MCF 10A (cell line): ENCODE measurements at regions of chr13 and their contacts with region 1.

Region 1: GRCh38 chr13:51797664-51798488 is 6.1 kb downstream of the DHRS12 start:
- DNase-seq: peak; percentile 83
- H3K4me3 Mint-ChIP-seq: no peak overlapping the region
- H3K27ac Mint-ChIP-seq: no peak overlapping the region
- H3K4me1 Mint-ChIP-seq: peaks cover 22% of the 10 kb centered on the region
- H3K27me3 Mint-ChIP-seq: no peaks in the 10 kb centered on the region
- CTCF ChIP-seq: peak; percentile 60

Region 2: GRCh38 chr13:51148952-51149573 is 648.8 kb before region 1 on chr13:
- CTCF ChIA-PET with region 1: interaction called, 21 read pairs
- POLR2A ChIA-PET with region 1: no interaction called
- intact Hi-C with region 1: loop called (anchors 1 kb)
- DNase-seq: peak; percentile 38
- H3K4me3 Mint-ChIP-seq: no peak overlapping the region
- H3K27ac Mint-ChIP-seq: no peak overlapping the region
- H3K4me1 Mint-ChIP-seq: no peaks in the 10 kb centered on the region
- H3K27me3 Mint-ChIP-seq: peaks cover 96% of the 10 kb centered on the region
- CTCF ChIP-seq: peak; percentile 53

Region 3: DNA sequence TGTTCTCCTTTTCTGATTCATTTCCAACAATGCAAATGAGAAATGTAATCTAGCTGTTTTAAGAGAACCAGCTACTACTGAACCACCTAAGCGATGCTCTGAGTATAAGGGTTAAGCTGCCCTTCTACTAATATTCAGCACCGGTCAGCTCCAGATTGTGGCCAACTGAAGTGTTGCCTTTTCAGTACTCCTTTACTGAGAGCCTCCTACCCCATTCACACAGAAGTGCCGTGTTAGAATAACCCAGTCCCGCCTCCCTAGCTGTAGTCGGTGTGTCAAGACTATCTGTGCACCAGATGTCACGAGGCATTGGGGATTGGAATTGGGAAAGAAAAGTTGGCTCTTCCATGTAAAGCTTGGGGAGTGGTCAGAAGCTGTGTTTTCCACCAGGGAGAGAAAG is 530.3 kb before region 1 on chr13:
- CTCF ChIA-PET with region 1: no interaction called
- POLR2A ChIA-PET with region 1: no interaction called
- intact Hi-C with region 1: no loop called
- DNase-seq: no peak
- H3K4me3 Mint-ChIP-seq: no peak overlapping the region
- H3K27ac Mint-ChIP-seq: no peak overlapping the region
- H3K4me1 Mint-ChIP-seq: no peaks in the 10 kb centered on the region
- H3K27me3 Mint-ChIP-seq: no peaks in the 10 kb centered on the region
- CTCF ChIP-seq: no peak

Region 4: GRCh38 chr13:51425410-51426042 is 372.4 kb before region 1 on chr13:
- CTCF ChIA-PET with region 1: interaction called, 13 read pairs
- POLR2A ChIA-PET with region 1: interaction called, 5 read pairs
- intact Hi-C with region 1: no loop called
- DNase-seq: peak; percentile 34
- H3K4me3 Mint-ChIP-seq: no peak overlapping the region
- H3K27ac Mint-ChIP-seq: peak overlapping the region; percentile 42
- H3K4me1 Mint-ChIP-seq: peaks cover 46% of the 10 kb centered on the region
- H3K27me3 Mint-ChIP-seq: no peaks in the 10 kb centered on the region
- CTCF ChIP-seq: no peak

Region 5: DNA sequence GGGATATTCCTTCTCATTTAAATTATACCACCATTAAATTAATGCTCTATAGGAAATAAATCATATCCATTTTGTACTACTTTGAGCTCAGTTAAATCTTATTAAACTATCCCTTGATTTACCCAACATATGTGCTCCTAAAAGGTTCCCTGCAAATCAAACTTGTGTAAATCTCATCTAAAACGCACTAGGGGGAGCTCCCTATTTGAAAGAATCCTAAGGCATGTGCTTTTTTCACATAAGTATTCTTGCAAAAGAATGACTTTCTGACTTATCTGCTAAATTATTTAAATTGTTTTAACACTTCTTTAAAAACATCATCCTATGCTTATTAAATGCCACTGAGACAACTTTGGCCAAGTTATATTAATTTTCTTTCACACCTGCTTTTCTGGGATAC is 353.0 kb before region 1 on chr13:
- CTCF ChIA-PET with region 1: interaction called, 23 read pairs
- POLR2A ChIA-PET with region 1: interaction called, 5 read pairs
- intact Hi-C with region 1: loop called (anchors 5 kb)
- DNase-seq: peak; percentile 38
- H3K4me3 Mint-ChIP-seq: no peak overlapping the region
- H3K27ac Mint-ChIP-seq: no peak overlapping the region
- H3K4me1 Mint-ChIP-seq: peaks cover 7% of the 10 kb centered on the region
- H3K27me3 Mint-ChIP-seq: no peaks in the 10 kb centered on the region
- CTCF ChIP-seq: peak; percentile 32

Region 6: DNA sequence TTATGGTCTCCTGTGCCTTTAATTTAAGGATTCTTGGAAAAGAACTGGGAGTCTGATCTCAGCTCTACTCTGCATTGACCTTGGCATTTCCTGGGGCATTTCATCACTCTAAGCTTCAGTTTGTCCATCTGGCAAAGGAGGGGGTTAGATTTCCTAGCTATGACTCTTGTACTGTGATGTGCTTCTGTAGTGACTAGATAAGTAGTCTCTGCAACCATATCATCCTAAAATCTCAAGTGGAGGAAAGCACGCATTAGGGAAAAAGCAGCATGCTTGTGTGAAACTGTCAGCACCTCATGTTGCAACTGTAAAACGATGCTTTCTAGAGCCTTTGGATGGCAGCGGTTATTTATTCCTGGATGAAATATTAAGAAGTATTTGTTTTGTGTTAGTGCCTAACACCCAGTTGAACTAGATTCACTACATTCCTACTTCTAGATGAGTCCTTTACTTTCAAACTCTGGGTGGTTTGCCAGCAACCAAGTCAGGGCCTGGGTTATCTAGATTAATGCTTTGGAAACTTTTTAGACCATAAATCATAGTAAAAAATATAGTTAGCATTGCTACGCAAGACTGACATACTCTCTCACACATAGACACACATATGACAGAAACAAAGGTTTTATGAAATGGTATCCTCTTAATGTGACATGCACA is 206.8 kb before region 1 on chr13:
- CTCF ChIA-PET with region 1: interaction called, 19 read pairs
- POLR2A ChIA-PET with region 1: interaction called, 16 read pairs
- intact Hi-C with region 1: loop called (anchors 5 kb)
- DNase-seq: peak; percentile 91
- H3K4me3 Mint-ChIP-seq: peak overlapping the region; percentile 61
- H3K27ac Mint-ChIP-seq: peak overlapping the region; percentile 77
- H3K4me1 Mint-ChIP-seq: peaks cover 59% of the 10 kb centered on the region
- H3K27me3 Mint-ChIP-seq: no peaks in the 10 kb centered on the region
- CTCF ChIP-seq: no peak

Region 7: GRCh38 chr13:51625555-51626345 is 172.1 kb before region 1 on chr13:
- CTCF ChIA-PET with region 1: interaction called, 11 read pairs
- POLR2A ChIA-PET with region 1: interaction called, 6 read pairs
- intact Hi-C with region 1: no loop called
- DNase-seq: peak; percentile 83
- H3K4me3 Mint-ChIP-seq: no peak overlapping the region
- H3K27ac Mint-ChIP-seq: peak overlapping the region; percentile 63
- H3K4me1 Mint-ChIP-seq: peaks cover 54% of the 10 kb centered on the region
- H3K27me3 Mint-ChIP-seq: no peaks in the 10 kb centered on the region
- CTCF ChIP-seq: no peak